Activated CD4-positive, alpha-beta memory T cell treated with anti-CD3 and anti-CD28 coated beads, Interleukin-2, amount 10 ng/mL, durations not matched to agents 7 days and 5 days (primary cell): ENCODE measurements at regions of chr11 and their contacts with region 1.

Region 1: DNA sequence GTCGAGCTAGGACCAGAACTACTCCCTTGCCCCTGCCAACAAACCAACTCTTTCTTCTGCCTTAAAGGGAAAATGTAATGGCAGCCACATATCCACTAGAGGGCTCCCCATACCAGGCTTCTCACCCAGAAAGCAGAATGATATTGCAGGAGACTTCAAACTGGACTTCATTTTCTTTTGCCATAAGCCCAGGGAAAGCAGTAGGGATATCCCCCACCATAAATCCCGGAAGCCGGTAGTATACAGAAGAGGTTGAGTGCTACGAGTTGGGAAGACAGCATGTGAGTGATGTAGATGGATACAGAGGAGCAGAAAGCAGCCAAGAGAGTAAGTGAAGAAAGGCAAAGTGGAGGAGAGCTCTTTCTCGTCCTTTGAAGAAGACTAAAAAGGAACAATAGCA is 12.1 kb downstream of the PLAAT5 start:
- DNase-seq: peak; percentile 55
- H3K4me3 Mint-ChIP-seq: no peak overlapping the region
- H3K27ac Mint-ChIP-seq: no peak overlapping the region
- H3K4me1 Mint-ChIP-seq: no peaks in the 10 kb centered on the region
- H3K27me3 Mint-ChIP-seq: peaks cover 25% of the 10 kb centered on the region

Region 2: GRCh38 chr11:63490551-63491239 is 11.8 kb after region 1 on chr11 and contains the start of gene PLAAT5:
- CTCF ChIA-PET with region 1: interaction called, 10 read pairs
- POLR2A ChIA-PET with region 1: no interaction called
- DNase-seq: no peak
- H3K4me3 Mint-ChIP-seq: peak within 1 kb of the TSS; percentile 67
- H3K27ac Mint-ChIP-seq: no peak within 1 kb of the TSS
- H3K4me1 Mint-ChIP-seq: peaks cover 14% of the 10 kb centered on the region
- H3K27me3 Mint-ChIP-seq: peaks cover 66% of the 10 kb centered on the region
- total RNA-seq, gene PLAAT5: not detected

Region 3: GRCh38 chr11:63635762-63636465 is 157.0 kb after region 1 on chr11:
- CTCF ChIA-PET with region 1: interaction called, 101 read pairs
- POLR2A ChIA-PET with region 1: interaction called, 8 read pairs
- DNase-seq: peak; percentile 72
- H3K4me3 Mint-ChIP-seq: no peak overlapping the region
- H3K27ac Mint-ChIP-seq: no peak overlapping the region
- H3K4me1 Mint-ChIP-seq: peaks cover 17% of the 10 kb centered on the region
- H3K27me3 Mint-ChIP-seq: no peaks in the 10 kb centered on the region

Region 4: DNA sequence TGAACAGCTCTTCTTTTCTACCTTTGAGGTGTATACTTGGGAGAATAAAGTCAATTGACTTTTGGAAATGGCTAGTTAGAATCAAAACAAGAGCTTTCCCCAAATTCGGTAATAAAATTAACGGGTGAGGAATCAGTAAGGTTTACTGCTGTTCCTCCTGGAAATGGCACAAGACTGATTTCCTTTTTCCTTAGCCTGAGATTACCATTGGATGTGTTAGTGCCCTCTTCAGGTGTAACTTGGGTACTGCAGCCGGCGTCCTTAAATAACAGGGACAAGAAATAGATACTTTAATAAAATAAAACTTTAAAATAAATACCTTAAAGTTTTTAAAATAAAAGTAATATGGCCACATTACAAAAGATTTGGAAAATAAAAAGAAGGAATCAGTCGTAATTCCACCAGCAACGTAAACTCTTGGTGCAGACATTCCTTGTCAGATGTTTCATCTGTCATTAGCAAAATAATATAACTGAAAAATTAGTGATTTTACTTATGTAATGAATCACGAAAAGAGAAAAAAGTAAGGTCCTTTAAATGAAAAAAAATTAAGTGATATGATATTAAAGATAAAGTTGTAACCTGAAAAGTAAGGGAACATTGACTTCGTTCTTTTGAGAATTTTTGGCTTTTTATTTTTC is 259.9 kb after region 1 on chr11:
- CTCF ChIA-PET with region 1: interaction called, 30 read pairs
- POLR2A ChIA-PET with region 1: no interaction called
- DNase-seq: peak; percentile 66
- H3K4me3 Mint-ChIP-seq: no peak overlapping the region
- H3K27ac Mint-ChIP-seq: no peak overlapping the region
- H3K4me1 Mint-ChIP-seq: peaks cover 2% of the 10 kb centered on the region
- H3K27me3 Mint-ChIP-seq: no peaks in the 10 kb centered on the region